Activated CD4-positive, alpha-beta memory T cell treated with anti-CD3 and anti-CD28 coated beads, Interleukin-2, amount 10 ng/mL, durations not matched to agents 7 days and 5 days (primary cell): ENCODE measurements at regions of chr2 and their contacts with region 1.

Region 1: DNA sequence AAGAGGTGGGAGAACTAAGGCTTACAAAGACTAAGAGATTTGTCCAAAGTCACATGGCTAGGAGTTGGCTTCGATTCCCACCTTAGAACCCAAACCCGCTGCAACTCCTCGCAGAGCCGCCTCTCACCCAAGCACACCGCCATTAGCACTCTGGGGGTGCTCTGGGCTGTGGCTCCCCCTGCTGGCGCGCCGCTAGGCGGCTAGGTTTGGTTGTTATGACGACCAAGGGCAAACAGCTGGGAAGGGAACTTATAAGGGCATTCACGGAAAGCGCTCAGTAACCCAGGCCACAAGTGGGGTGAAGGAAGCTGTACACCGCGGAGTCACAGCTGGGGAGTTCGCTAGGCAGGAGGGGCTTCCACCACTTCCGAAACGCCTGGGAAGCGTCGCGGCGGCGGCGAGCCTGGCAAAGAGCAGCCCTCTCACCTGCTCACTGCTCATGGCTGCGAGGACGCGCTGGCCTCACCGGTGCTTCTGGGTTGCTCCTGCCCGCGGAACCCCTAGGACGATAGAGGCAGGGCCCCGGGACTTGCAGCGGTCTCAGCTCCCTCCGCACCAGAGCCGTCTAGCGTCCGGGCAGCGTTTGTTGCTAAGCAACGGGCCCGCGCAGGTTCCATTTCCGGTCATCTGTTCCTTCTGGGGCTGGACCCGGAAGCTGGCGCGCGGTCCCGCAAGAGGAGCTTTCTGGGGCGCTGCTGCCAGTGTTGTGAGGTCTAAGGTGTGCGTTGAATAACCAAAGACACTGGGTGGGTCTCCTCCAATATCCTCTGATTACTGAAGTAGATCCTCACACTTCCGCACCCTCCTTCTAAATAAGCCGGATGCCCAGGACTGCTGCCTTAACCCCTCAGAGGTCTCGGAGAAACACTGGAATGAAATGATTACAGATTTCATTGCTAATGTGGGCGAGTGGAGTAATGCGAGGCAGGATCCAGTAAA is at the start of gene DNAH7:
- DNase-seq: peak; percentile 94
- H3K4me3 Mint-ChIP-seq: peak within 1 kb of the TSS; percentile 78
- H3K27ac Mint-ChIP-seq: peak within 1 kb of the TSS; percentile 38
- H3K4me1 Mint-ChIP-seq: peaks cover 12% of the 10 kb centered on the region
- H3K27me3 Mint-ChIP-seq: peaks cover 17% of the 10 kb centered on the region
- total RNA-seq, gene DNAH7: not detected

Region 2: GRCh38 chr2:196046123-196046917 is 22.2 kb before region 1 on chr2:
- CTCF ChIA-PET with region 1: interaction called, 10 read pairs
- POLR2A ChIA-PET with region 1: no interaction called
- DNase-seq: no peak
- H3K4me3 Mint-ChIP-seq: no peak overlapping the region
- H3K27ac Mint-ChIP-seq: no peak overlapping the region
- H3K4me1 Mint-ChIP-seq: peaks cover 4% of the 10 kb centered on the region
- H3K27me3 Mint-ChIP-seq: peaks cover 11% of the 10 kb centered on the region

Region 3: GRCh38 chr2:196239622-196240587 is 171.4 kb after region 1 on chr2:
- CTCF ChIA-PET with region 1: no interaction called
- POLR2A ChIA-PET with region 1: no interaction called
- DNase-seq: peak; percentile 93
- H3K4me3 Mint-ChIP-seq: peak overlapping the region; percentile 57
- H3K27ac Mint-ChIP-seq: peak overlapping the region; percentile 93
- H3K4me1 Mint-ChIP-seq: peaks cover 74% of the 10 kb centered on the region
- H3K27me3 Mint-ChIP-seq: no peaks in the 10 kb centered on the region

Region 4: GRCh38 chr2:196337208-196337953 is 268.8 kb after region 1 on chr2:
- CTCF ChIA-PET with region 1: interaction called, 30 read pairs
- POLR2A ChIA-PET with region 1: interaction called, 3 read pairs
- DNase-seq: peak; percentile 23
- H3K4me3 Mint-ChIP-seq: no peak overlapping the region
- H3K27ac Mint-ChIP-seq: no peak overlapping the region
- H3K4me1 Mint-ChIP-seq: peaks cover 2% of the 10 kb centered on the region
- H3K27me3 Mint-ChIP-seq: peaks cover 7% of the 10 kb centered on the region